Heart right ventricle (tissue), 16 donors: ENCODE measurements at regions of chr1 and their contacts with region 1.

Region 1: GRCh38 chr1:209207701-209208286 is 375.7 kb upstream of the CAMK1G start:
- DNase-seq: peak; percentile 57 to 62
- ATAC-seq: peak; percentile 87 to 96 (median 95)
- H3K4me3 ChIP-seq: peak overlapping the region in 9 of 10 donors; percentile 5 to 47 (median 38)
- H3K27ac ChIP-seq: peak overlapping the region in 3 of 10 donors; percentile 4 to 58 (median 5)
- H3K4me1 ChIP-seq: peaks cover 4 to 15% (median 7%) of the 10 kb centered on the region in 9 donors
- H3K27me3 ChIP-seq: peaks cover 0 to 53% (median 48%) of the 10 kb centered on the region in 7 donors
- CTCF ChIP-seq: peak; percentile 34 to 89 (median 71)

Region 2: GRCh38 chr1:208652296-208653160 is 555.3 kb before region 1 on chr1:
- intact Hi-C with region 1: loop called in 5 of 10 experiments (anchors 5 to 10 kb)
- DNase-seq: peak in 1 of 2 donors; percentile 42
- ATAC-seq: peak; percentile 70 to 90 (median 84)
- H3K4me3 ChIP-seq: no peak overlapping the region
- H3K27ac ChIP-seq: no peak overlapping the region
- H3K4me1 ChIP-seq: peaks cover 0 to 7% (median 0%) of the 10 kb centered on the region in 9 donors
- H3K27me3 ChIP-seq: peaks cover 0 to 29% (median 4%) of the 10 kb centered on the region in 7 donors
- CTCF ChIP-seq: peak; percentile 70 to 91 (median 88)

Region 3: DNA sequence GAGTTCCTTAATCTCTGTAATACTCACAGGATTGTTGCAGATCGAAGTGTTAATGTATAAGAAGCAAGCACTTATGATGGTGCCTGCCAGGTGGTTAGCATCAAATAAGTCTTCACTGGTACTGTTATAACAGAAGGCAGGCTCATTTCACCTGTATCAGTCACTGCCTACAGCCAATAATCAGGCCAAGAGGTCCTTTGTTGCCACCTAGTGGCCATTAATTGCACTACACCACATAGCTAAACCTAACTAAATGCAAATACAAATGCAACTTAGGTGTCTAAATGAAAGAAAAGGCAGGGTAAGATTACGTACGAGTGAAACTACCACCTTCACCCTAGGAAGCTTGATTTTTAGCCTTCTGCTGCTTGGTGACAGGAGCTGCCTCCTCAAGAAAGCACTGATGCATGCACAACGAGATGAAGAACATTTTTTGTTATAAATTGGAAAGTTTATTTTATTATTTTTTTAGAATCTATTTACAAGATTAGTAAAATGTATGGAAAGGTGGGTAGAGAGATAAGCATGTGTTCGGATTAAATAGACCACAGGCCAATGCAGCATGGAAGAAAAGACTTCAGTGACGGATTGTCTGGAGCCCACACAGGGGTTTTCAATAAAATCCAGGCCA is 41.0 kb after region 1 on chr1:
- intact Hi-C with region 1: loop called in 3 of 10 experiments (anchors 5 kb)
- DNase-seq: peak in 1 of 2 donors; percentile 38
- ATAC-seq: peak in 3 of 8 donors; percentile 41 to 62 (median 45)
- H3K4me3 ChIP-seq: no peak overlapping the region
- H3K27ac ChIP-seq: no peak overlapping the region
- H3K4me1 ChIP-seq: no peaks in the 10 kb centered on the region
- H3K27me3 ChIP-seq: peaks cover 0 to 24% (median 3%) of the 10 kb centered on the region in 7 donors
- CTCF ChIP-seq: peak; percentile 87 to 96 (median 91)

Region 4: DNA sequence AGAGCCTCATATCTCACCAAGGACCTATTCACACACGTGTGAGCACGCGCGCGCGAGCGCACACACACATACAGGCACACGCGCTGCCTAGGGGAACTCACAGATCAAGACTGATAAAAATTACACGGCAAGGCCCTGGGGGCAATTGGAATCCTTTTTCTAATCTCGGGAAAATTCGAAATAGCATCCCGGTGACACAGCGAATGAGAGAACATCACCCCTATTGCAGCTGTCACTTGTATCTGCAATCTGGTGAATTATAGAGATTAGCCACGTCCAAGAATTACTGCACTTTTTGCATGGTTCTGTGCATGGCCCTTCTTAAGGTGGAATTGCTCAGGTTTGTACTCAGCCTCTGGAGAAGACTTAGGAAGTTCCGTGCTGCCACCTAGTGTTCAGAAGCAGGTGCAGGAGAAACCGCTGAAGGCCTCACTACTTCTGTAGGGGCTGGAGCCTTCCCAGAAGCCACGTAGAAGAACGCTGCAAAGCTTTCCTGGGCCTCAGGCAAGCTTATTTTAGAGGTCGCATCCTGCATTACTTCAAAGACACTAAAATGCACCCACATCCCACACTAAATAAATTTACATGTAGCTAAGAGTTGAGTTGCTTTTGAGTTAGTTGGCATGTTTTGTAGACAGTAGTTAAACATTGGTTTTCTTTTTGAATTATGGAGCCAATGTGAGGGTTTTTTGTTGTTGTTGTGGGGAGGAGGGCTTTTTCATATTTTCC is 146.5 kb after region 1 on chr1:
- intact Hi-C with region 1: loop called in 3 of 10 experiments (anchors 5 to 10 kb)
- DNase-seq: peak; percentile 25 to 81
- ATAC-seq: peak; percentile 81 to 94 (median 89)
- H3K4me3 ChIP-seq: no peak overlapping the region
- H3K27ac ChIP-seq: no peak overlapping the region
- H3K4me1 ChIP-seq: peaks cover 0 to 13% (median 0%) of the 10 kb centered on the region in 9 donors
- H3K27me3 ChIP-seq: no peaks in the 10 kb centered on the region
- CTCF ChIP-seq: peak; percentile 55 to 90 (median 84)

Region 5: DNA sequence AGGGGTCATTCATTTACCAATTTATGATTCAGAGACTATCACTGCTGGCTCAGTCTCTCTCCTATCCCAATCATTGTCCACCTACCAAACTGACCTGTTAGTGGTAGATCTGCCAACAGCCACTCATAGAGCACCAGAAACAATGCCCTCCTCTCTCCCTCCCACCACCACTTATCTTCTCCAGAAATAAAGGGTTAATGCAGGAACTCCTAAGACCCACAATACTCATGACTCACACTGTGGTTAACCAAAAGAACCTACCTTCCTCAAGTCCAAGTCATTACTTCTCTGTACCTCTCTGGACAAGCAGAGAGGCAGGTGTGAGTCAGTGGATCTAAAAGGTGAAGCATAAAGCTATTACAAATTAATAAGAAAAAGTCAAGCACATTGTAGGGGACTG is 334.8 kb after region 1 on chr1:
- intact Hi-C with region 1: no loop called
- DNase-seq: no peak
- ATAC-seq: no peak
- H3K4me3 ChIP-seq: no peak overlapping the region
- H3K27ac ChIP-seq: no peak overlapping the region
- H3K4me1 ChIP-seq: no peaks in the 10 kb centered on the region
- H3K27me3 ChIP-seq: peaks cover 0 to 17% (median 13%) of the 10 kb centered on the region in 7 donors
- CTCF ChIP-seq: no peak

Region 6: DNA sequence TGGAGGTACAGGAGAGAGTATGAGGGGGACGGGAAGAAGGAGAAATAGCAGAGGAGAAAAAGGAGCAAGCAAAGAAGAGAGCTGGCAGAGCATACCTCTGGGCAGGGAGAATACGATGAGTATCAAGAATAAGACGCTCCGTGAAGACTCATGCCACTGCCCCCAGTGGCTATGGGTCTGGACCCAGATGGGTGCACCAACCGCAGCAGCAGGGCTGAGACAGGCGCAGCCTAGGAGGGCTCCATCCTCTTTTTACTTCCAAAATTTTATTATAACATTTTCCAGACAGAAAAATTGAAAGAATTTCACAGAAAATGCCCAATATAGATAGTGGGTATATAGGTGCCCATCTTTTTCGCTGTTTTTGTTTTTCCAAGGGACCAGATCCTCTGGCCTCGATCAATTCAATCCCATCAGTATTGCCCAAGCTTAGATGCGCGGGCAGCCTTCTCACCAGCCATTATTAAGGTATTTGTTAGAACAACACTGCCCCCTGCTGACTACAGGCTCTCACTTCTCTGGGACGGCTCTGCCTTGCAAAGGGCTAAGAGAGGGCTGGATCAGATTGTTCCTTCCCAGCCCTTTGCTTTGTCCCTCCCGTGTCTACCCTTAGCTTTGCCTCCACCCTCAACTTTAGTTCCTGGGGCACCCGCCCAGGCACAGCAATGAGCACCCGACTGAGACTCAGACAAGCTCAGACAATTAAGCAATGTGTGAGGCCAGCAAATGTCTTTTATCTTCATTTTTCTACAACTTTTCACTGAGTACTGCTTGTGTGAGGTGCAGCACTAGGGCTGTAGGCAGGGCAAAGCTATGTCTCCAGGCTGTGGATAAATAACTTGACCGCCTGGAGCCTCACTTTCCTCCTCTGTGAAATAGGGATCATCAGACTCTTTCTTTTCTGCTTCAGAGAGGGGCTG is 358.2 kb after region 1 on chr1:
- intact Hi-C with region 1: loop called in 8 of 10 experiments (anchors 5 to 10 kb)
- DNase-seq: peak; percentile 50 to 79
- ATAC-seq: peak; percentile 79 to 91 (median 88)
- H3K4me3 ChIP-seq: no peak overlapping the region
- H3K27ac ChIP-seq: no peak overlapping the region
- H3K4me1 ChIP-seq: peaks cover 0 to 4% (median 0%) of the 10 kb centered on the region in 9 donors
- H3K27me3 ChIP-seq: peaks cover 0 to 32% (median 12%) of the 10 kb centered on the region in 7 donors
- CTCF ChIP-seq: peak; percentile 38 to 83 (median 76)